ENCODE measurements at regions of chr1 and their contacts with region 1.

Region 1: GRCh38 chr1:174726167-174726879 is 273.4 kb upstream of the CACYBP start:
- DNase-seq: no peak
- H3K4me3 Mint-ChIP-seq: no peak overlapping the region
- H3K27ac Mint-ChIP-seq: no peak overlapping the region
- H3K4me1 Mint-ChIP-seq: no peaks in the 10 kb centered on the region
- H3K27me3 Mint-ChIP-seq: no peaks in the 10 kb centered on the region

Region 2: GRCh38 chr1:174262349-174263241 is 463.7 kb before region 1 on chr1:
- intact Hi-C with region 1: loop called (anchors 1 kb)
- DNase-seq: no peak
- H3K4me3 Mint-ChIP-seq: no peak overlapping the region
- H3K27ac Mint-ChIP-seq: no peak overlapping the region
- H3K4me1 Mint-ChIP-seq: no peaks in the 10 kb centered on the region
- H3K27me3 Mint-ChIP-seq: no peaks in the 10 kb centered on the region

Region 3: DNA sequence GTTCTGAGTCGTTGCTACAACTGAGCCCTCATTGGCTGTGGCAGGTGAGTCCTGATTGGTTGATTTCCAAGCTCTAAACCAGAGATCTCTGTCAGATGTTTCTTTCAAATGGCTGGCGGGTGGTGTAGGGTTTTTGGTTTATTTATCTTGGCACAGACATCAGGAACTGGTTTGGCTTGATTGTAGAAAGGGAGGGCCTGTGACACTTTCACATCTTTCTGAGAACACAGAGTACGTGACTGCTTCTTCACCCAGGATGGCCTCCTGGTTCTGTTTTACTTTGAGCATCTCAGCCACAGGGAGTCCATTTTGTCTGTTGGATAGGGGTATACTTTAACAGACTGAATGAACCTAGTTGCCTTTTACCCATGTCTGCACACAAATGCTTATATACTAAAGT is 368.0 kb before region 1 on chr1:
- intact Hi-C with region 1: no loop called
- DNase-seq: no peak
- H3K4me3 Mint-ChIP-seq: no peak overlapping the region
- H3K27ac Mint-ChIP-seq: no peak overlapping the region
- H3K4me1 Mint-ChIP-seq: no peaks in the 10 kb centered on the region
- H3K27me3 Mint-ChIP-seq: no peaks in the 10 kb centered on the region

Region 4: GRCh38 chr1:174676856-174677255 is 49.5 kb before region 1 on chr1:
- intact Hi-C with region 1: no loop called
- DNase-seq: no peak
- H3K4me3 Mint-ChIP-seq: no peak overlapping the region
- H3K27ac Mint-ChIP-seq: no peak overlapping the region
- H3K4me1 Mint-ChIP-seq: no peaks in the 10 kb centered on the region
- H3K27me3 Mint-ChIP-seq: no peaks in the 10 kb centered on the region